ENCODE measurements at regions of chr11 and their contacts with region 1.

Region 1: DNA sequence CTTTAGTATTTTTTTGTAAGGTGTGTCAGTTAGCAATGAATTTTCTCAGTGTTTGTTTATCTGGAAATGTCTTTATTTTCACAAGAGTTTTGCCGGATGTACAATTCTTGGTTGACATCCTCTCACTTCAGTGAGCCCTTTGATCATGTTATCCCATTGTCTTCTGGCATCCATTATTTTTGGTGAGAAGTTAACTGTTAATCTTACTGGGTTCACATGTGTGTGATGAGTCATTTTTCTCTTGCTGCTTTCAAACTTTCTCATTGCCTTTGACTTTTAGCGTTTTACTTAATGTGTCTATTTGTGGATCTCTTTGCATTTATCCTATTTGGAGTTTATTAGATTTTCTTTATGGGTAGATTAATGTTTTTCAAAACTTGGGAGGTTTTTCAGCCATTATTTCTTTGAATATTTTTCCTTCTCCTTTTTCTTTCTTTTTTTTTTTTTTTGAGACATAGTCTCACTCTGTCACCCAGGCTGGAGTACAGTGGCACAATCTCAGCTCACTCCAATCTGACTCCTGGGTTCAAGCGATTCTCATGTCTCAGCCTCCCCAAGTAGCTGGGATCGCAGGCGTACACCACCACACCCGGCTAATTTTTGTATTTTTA is 100.5 kb upstream of the RRM1 start:
- DNase-seq: no peak
- H3K4me3 Mint-ChIP-seq: no peak overlapping the region
- H3K27ac Mint-ChIP-seq: no peak overlapping the region
- H3K4me1 Mint-ChIP-seq: peaks cover 31% of the 10 kb centered on the region
- H3K27me3 Mint-ChIP-seq: no peaks in the 10 kb centered on the region

Region 2: DNA sequence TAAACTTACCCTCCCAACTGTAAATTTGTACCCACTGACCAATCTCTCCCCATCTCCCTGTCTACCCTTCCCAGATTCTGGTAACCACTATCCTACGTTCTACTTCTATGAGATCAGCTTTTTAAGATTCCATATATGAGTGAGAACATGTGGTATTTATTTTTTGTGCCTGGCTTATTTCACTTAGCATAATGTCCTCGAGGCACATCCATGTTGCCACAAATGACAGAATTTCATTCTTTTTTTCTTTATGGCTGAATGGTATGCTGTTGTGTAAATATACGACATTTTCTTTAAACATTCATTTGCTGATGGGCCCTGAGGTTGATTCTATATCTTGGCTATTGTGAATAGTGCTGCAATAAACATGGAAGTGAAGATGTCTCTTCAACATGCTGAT is 25.8 kb after region 1 on chr11:
- intact Hi-C with region 1: no loop called
- DNase-seq: no peak
- H3K4me3 Mint-ChIP-seq: no peak overlapping the region
- H3K27ac Mint-ChIP-seq: peak overlapping the region; percentile 10
- H3K4me1 Mint-ChIP-seq: peaks cover 21% of the 10 kb centered on the region
- H3K27me3 Mint-ChIP-seq: no peaks in the 10 kb centered on the region

Region 3: DNA sequence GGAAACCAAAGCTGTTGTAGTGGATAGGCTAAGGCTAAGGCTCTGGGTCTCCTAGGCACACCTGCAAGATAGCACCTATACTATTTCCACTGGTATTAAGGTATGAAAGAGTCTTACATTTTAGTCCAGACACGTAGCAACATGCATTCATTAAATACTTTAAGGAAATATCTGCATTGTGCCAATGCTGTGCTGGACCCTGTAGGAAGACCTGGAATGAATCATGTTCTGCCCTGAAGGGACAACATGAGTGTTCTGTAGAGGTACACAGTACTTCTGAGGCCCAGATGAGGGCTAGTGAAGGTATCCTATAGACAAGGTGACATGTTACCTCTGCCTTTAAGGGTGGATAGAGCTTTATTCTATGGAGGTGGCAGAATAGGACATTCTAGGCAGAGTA is 65.3 kb after region 1 on chr11:
- intact Hi-C with region 1: loop called (anchors 5 kb)
- DNase-seq: no peak
- H3K4me3 Mint-ChIP-seq: no peak overlapping the region
- H3K27ac Mint-ChIP-seq: no peak overlapping the region
- H3K4me1 Mint-ChIP-seq: peaks cover 26% of the 10 kb centered on the region
- H3K27me3 Mint-ChIP-seq: no peaks in the 10 kb centered on the region